ENCODE measurements at regions of chr1 and their contacts with region 1.

Region 1: DNA sequence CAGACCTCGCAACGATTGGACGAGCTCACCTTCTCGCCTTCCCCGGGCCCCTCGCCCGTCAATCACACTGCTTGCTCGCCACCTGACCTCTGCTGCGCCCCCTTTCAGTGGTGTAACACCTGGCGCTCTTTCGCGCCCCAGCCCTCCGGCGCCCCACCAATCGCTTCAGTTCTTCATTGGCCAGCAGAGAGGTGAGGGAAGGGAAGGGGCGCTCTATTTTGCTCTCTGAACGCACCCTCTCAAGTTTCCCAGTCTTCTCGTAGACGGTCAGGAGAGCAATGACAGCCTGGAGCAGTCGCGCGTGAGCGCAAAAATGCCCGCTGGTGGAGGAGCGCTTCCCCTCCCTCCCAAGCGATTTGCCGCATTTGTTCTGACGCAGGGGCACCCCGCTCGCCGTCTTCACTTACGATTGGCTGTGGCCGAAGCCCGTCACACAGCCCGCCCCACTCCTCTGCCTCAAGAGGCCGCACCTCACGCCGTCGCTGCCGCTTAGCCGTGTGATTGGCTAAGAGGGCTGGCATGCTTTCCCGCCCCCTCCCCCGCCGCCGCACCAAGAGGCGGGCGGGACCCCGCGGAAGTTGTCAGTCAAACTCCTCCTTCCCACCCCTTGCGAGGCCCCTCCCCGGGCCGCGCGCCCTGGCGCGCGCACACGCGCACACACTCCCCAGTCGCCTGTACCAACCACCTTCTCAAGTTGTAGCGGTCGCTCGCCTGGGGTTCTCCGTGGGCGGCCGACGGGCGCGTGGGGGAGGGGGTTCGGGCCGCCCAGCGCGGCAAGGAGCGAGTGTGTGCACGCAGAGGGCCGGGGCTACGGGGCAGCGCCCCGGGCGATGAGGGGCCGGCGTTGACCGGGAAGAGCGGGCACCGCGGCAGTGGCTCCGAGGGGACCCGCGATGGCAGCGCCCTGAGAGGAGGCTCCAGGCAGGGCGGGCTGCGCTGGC is at the start of gene PPP2R5A:
- DNase-seq: peak; percentile 99
- H3K4me3 ChIP-seq: peak within 1 kb of the TSS; percentile 80
- H3K27ac ChIP-seq: peak within 1 kb of the TSS; percentile 81
- H3K4me1 ChIP-seq: peaks cover 29% of the 10 kb centered on the region
- CTCF ChIP-seq: peak; percentile 73
- total RNA-seq, gene PPP2R5A: 26.8 and 28.0 TPM in 2 replicates

Region 2: DNA sequence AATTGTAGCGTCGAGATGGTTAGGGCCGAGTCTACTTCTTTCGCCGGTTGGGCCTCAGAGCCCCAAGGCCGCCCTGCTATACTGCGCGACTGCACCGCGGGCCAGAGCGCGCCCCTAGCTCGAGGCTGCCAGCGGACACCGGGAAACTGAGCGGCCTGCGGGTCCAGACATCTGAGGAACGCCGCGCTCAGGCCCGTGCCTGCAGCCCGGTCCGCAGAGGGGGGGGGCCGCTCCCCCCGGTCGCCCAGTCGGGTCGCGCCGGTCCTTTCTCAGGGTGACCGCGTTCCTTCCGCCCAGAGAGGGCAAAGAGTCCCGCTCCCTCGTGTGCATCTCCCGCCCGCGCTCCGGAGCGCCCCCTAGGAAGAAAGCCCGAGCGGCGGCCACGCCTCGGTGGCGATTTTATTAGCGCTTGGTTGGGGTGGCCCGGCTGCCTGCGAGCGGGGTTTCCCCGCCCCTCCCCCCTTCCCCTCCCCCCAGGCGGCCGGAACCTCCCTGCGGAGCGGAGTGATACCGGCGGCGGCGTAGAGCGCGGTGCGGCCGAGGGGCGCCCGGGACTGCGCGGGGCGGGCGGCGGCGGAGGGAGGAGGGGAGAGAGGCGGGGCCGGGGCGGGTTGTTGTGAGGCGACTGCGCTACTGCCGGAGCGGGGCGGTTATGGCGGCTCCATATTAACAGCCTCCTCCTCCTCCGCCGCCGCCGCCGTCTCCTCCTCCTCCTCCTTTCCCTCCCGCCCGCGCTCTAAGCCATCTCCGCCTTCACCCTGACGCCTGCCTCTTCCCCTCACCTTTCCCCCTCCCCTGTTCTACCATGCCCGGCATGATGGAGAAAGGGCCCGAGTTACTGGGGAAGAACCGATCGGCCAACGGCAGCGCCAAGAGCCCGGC is 1026.0 kb before region 1 on chr1 and contains the start of gene RCOR3:
- CTCF ChIA-PET with region 1: no interaction called
- POLR2A ChIA-PET with region 1: no interaction called
- intact Hi-C with region 1: loop called (anchors 5 kb)
- DNase-seq: peak; percentile 92
- H3K4me3 ChIP-seq: peak within 1 kb of the TSS; percentile 87
- H3K27ac ChIP-seq: peak within 1 kb of the TSS; percentile 96
- H3K4me1 ChIP-seq: peaks cover 16% of the 10 kb centered on the region
- CTCF ChIP-seq: peak; percentile 67
- total RNA-seq, gene RCOR3: 32.3 and 34.8 TPM in 2 replicates

Region 3: GRCh38 chr1:211680752-211681327 is 604.2 kb before region 1 on chr1:
- CTCF ChIA-PET with region 1: interaction called, 13 read pairs
- POLR2A ChIA-PET with region 1: no interaction called
- intact Hi-C with region 1: no loop called
- DNase-seq: peak; percentile 94
- H3K4me3 ChIP-seq: no peak overlapping the region
- H3K27ac ChIP-seq: peak overlapping the region; percentile 56
- H3K4me1 ChIP-seq: peaks cover 56% of the 10 kb centered on the region
- CTCF ChIP-seq: peak; percentile 89

Region 4: GRCh38 chr1:211830330-211831142 is 454.5 kb before region 1 on chr1 and contains the start of gene LPGAT1:
- CTCF ChIA-PET with region 1: no interaction called
- POLR2A ChIA-PET with region 1: no interaction called
- intact Hi-C with region 1: loop called (anchors 5 kb)
- DNase-seq: peak; percentile 81
- H3K4me3 ChIP-seq: peak within 1 kb of the TSS; percentile 77
- H3K27ac ChIP-seq: peak within 1 kb of the TSS; percentile 48
- H3K4me1 ChIP-seq: peaks cover 32% of the 10 kb centered on the region
- CTCF ChIP-seq: peak; percentile 75
- total RNA-seq, gene LPGAT1: 14.1 and 18.7 TPM in 2 replicates

Region 5: GRCh38 chr1:212062832-212063438 is 222.1 kb before region 1 on chr1:
- CTCF ChIA-PET with region 1: no interaction called
- POLR2A ChIA-PET with region 1: interaction called, 3 read pairs
- intact Hi-C with region 1: loop called (anchors 5 kb)
- DNase-seq: peak; percentile 60
- H3K4me3 ChIP-seq: no peak overlapping the region
- H3K27ac ChIP-seq: no peak overlapping the region
- H3K4me1 ChIP-seq: no peaks in the 10 kb centered on the region
- CTCF ChIP-seq: peak; percentile 88

Region 6: DNA sequence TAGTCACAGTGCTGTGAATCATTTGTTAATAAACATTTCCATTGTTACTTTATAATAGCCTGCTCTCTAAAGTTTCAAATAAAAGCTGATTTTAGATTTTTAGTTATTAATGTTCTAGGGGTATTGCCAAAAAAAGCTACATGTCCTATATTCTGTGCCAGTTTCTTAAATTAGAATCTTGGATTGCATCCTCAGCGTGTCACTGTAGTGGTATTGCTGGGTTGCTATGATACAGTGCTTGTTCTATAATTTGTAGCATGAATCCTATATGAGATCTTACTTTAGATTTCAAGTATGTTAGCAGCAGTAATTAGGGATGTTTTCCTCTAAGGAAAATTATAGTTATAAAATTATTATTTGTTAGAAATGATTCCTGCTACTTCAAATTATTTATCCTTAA is 16.6 kb after region 1 on chr1:
- CTCF ChIA-PET with region 1: no interaction called
- POLR2A ChIA-PET with region 1: no interaction called
- intact Hi-C with region 1: no loop called
- DNase-seq: no peak
- H3K4me3 ChIP-seq: no peak overlapping the region
- H3K27ac ChIP-seq: no peak overlapping the region
- H3K4me1 ChIP-seq: no peaks in the 10 kb centered on the region
- CTCF ChIP-seq: no peak

Region 7: DNA sequence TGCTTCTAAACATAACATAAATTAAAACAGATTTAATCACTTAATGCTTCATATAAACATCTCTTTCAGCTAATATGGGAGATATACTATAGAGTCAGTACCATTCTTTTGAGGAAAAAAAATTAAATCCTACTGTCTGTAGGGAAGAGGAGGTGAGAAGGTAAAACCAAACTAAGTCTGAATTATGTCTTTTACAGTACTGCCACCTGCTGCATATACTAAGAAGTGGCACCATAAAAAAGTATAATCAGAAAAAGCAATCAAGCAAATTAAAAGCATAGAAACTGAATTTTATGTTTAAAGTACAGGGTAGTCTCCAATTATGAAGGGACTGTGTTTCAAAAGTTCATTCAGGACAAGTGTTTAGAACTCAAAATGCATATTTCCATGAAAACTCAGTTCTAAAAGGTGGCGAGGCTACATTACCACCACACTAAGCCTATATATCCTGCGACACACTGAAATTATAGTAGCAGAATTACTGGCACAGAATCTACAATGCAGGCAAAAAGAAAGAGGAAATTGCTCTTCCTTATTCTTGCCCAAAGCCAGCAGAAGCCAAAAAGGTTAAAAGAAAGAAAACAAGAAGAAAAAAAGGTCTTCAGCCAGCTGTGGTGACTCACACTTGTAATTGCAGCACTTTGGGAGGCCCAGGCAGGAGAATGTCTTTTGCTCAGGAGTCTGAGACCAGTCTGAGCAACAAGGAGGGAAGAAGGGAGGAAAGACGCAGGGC is 497.6 kb after region 1 on chr1:
- CTCF ChIA-PET with region 1: interaction called, 11 read pairs
- POLR2A ChIA-PET with region 1: no interaction called
- intact Hi-C with region 1: no loop called
- DNase-seq: peak; percentile 42
- H3K4me3 ChIP-seq: no peak overlapping the region
- H3K27ac ChIP-seq: no peak overlapping the region
- H3K4me1 ChIP-seq: no peaks in the 10 kb centered on the region
- CTCF ChIP-seq: peak; percentile 89